WTC11 (cell line): ENCODE measurements at regions of chr14 and their contacts with region 1.

Region 1: DNA sequence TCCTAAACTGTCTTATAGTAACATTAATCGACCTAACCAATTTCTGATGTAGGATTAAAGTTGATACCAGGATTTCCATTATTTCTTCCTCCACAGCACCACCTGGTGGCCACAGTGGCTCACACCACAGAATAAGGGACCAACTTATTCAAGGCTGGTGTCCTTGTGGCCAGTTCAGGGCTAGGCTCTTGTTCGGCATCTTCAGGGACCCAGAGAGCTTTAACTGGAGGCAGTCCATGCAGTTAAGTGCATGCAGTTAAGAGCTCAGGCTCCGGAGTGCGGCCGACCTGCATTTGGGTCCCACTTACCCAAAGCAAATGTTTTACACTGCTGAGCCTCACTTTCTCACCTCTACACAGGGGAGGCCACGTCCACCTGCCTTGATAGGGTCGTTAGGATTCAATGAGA is 42.0 kb upstream of the GPR68 start:
- DNase-seq: peak; percentile 83
- ATAC-seq: peak; percentile 100
- H3K4me3 Mint-ChIP-seq: no peak overlapping the region
- H3K27ac Mint-ChIP-seq: no peak overlapping the region
- H3K4me1 Mint-ChIP-seq: no peaks in the 10 kb centered on the region
- H3K27me3 Mint-ChIP-seq: no peaks in the 10 kb centered on the region
- CTCF ChIP-seq: peak; percentile 73

Region 2: GRCh38 chr14:91244501-91244901 is 42.0 kb before region 1 on chr14 and contains the start of gene GPR68:
- CTCF ChIA-PET with region 1: interaction called, 19 read pairs
- POLR2A ChIA-PET with region 1: no interaction called
- DNase-seq: peak; percentile 43
- ATAC-seq: peak; percentile 82
- H3K4me3 Mint-ChIP-seq: no peak within 1 kb of the TSS
- H3K27ac Mint-ChIP-seq: no peak within 1 kb of the TSS
- H3K4me1 Mint-ChIP-seq: peaks cover under 1% of the 10 kb centered on the region; the same call in 1 of the 2 replicates
- H3K27me3 Mint-ChIP-seq: peaks cover 12% of the 10 kb centered on the region
- CTCF ChIP-seq: no peak
- total RNA-seq, gene GPR68: 0.21 to 0.28 TPM (median 0.27 TPM) in 3 replicates

Region 3: DNA sequence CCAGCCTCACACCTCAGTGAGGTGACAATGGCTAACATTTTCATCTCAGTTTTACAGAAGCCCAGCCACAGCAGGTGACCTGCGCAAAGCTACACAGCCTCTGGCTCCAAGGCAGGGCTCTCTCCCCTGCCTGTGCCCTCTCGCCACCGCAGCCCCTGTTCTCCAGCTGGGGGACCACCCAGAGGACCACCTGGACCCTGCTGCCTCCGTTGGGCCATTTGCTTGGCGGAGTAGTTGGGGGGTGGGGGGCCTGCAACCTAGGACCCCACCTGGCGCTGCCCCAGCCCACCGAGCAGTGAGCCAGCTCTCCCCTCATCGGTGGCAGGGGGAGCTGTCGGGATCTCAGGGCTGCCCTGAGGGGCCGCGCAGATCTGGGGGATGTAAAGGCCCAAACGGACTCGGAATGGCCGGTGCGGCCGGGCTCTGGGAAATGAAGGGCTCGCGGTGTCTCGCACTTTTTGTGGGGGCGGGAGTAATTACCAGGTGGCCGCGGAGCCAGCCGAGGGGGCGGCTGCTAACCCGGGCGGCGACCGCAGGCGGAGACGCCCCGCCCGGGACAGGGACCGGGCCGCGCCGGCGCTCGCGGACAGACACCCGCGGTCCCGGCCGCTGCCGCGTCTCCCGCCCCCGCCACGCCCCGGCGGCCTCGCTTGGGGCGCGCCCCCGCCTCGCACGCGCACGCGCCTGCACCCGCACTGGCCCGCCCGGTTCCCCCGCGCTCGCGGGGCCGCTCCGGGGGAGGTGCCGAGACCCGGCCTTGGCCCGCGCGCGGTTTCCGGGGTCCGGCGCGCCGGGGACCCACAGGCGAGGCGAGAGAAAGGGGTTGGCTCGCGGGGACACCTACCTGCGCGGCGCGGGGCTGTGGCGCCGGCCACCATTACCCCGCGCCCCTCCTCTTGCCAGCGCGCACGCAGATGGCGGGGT is 33.4 kb before region 1 on chr14:
- CTCF ChIA-PET with region 1: interaction called, 11 read pairs
- POLR2A ChIA-PET with region 1: no interaction called
- DNase-seq: peak; percentile 72
- ATAC-seq: peak; percentile 77
- H3K4me3 Mint-ChIP-seq: peak overlapping the region; percentile 71
- H3K27ac Mint-ChIP-seq: no peak overlapping the region
- H3K4me1 Mint-ChIP-seq: peaks cover 21% of the 10 kb centered on the region
- H3K27me3 Mint-ChIP-seq: peaks cover 33% of the 10 kb centered on the region
- CTCF ChIP-seq: no peak

Region 4: GRCh38 chr14:91264151-91265150 is 22.1 kb before region 1 on chr14:
- CTCF ChIA-PET with region 1: interaction called, 15 read pairs
- POLR2A ChIA-PET with region 1: no interaction called
- DNase-seq: peak; percentile 45
- ATAC-seq: peak; percentile 64
- H3K4me3 Mint-ChIP-seq: peak overlapping the region; percentile 82
- H3K27ac Mint-ChIP-seq: no peak overlapping the region
- H3K4me1 Mint-ChIP-seq: peaks cover 12% of the 10 kb centered on the region
- H3K27me3 Mint-ChIP-seq: peaks cover 35% of the 10 kb centered on the region
- CTCF ChIP-seq: no peak

Region 5: GRCh38 chr14:91272341-91273272 is 13.9 kb before region 1 on chr14:
- CTCF ChIA-PET with region 1: interaction called, 19 read pairs
- POLR2A ChIA-PET with region 1: no interaction called
- DNase-seq: no peak
- ATAC-seq: no peak
- H3K4me3 Mint-ChIP-seq: no peak overlapping the region
- H3K27ac Mint-ChIP-seq: peak overlapping the region; percentile 63
- H3K4me1 Mint-ChIP-seq: no peaks in the 10 kb centered on the region
- H3K27me3 Mint-ChIP-seq: no peaks in the 10 kb centered on the region
- CTCF ChIP-seq: no peak

Region 6: DNA sequence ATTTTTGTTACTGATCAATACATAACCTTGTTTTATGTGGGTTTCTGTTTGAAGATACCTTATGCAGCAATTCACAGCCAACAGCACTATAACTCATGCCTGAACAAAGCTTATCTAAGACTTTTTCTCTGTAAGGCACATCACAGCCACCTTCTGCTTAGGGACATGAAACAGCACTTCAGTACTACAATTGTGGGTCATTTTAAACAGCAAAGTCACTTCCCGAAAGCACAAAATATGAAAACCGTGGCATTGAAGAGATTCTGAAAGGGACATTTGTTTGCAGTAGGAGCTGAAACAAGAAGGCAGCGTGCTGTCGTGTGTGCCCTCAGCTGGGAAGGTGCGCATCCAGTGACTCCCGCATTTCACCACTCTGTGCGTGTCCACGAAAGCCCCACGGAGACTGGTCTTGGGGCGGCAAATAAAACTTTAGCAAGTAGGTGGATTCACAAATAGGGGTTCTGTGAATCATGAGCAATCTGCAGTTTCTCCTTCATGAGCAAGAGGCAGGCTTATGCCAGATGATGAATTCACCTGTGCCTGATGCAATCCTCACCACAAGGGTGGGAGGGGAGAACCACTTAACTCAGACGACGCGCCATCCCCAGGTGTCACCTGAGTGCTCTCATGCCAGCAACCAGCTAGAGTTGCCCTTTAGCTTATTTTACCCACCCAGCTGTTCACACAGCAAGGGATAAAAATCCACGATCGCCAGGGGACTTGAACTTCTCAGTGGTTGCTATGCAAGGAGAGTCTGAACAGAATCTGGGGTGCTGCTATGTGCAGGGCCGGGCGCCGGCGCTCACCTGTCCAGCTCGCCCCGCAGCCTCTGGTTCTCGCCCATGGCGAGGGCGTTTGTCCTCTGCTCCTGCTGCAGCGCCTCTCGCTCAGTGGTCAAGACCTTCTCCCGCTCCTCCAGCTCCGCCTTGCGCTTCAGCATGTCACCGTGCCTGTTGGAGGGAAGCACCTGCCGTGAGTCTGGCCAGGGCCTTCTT is 12.9 kb after region 1 on chr14:
- CTCF ChIA-PET with region 1: interaction called, 13 read pairs
- POLR2A ChIA-PET with region 1: no interaction called
- DNase-seq: no peak
- ATAC-seq: no peak
- H3K4me3 Mint-ChIP-seq: no peak overlapping the region
- H3K27ac Mint-ChIP-seq: 0 out of 2 replicates have a peak overlapping the region, but pooled peaks have one; percentile 7
- H3K4me1 Mint-ChIP-seq: peaks cover 14% of the 10 kb centered on the region
- H3K27me3 Mint-ChIP-seq: no peaks in the 10 kb centered on the region; the same call in 1 of the 2 replicates
- CTCF ChIP-seq: no peak

Region 7: DNA sequence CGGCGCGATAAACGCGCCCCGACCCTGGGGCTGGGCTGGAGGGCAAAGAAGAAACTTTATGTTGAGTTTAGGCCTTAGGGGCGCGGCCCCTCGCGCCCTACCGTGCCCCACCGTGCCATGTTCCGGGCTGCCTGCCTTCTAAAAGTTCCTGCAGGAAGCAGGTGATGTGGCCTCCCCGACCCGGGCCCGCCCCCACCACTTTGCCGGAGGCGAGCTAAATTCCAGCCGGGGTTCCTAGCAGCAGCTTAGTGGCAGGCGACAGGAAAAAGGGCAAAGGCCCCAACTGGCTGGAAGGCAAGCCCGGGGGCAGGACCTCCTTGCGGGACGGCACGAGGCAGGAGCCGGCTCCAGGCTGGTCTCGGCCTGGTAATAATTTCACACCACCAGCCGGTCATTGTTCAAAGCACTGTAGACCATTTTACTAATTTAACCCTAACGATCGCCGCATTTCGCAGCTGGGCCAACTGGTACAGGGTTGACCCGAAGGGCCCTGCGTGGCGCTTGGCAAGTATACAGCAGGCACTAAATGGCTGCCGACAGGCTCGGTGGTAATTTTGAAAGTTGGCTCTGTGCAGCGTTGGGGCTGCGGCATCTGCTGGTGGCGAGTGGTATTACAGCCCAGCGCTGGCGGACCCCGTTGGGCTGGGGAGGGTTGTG is 132.0 kb after region 1 on chr14:
- CTCF ChIA-PET with region 1: interaction called, 16 read pairs
- POLR2A ChIA-PET with region 1: no interaction called
- DNase-seq: peak; percentile 83
- ATAC-seq: peak; percentile 23
- H3K4me3 Mint-ChIP-seq: peak overlapping the region; percentile 53
- H3K27ac Mint-ChIP-seq: no peak overlapping the region
- H3K4me1 Mint-ChIP-seq: peaks cover 35% of the 10 kb centered on the region
- H3K27me3 Mint-ChIP-seq: no peaks in the 10 kb centered on the region; the same call in 1 of the 2 replicates
- CTCF ChIP-seq: peak; percentile 98